ENCODE measurements at regions of chr9 and their contacts with region 1.

Region 1: DNA sequence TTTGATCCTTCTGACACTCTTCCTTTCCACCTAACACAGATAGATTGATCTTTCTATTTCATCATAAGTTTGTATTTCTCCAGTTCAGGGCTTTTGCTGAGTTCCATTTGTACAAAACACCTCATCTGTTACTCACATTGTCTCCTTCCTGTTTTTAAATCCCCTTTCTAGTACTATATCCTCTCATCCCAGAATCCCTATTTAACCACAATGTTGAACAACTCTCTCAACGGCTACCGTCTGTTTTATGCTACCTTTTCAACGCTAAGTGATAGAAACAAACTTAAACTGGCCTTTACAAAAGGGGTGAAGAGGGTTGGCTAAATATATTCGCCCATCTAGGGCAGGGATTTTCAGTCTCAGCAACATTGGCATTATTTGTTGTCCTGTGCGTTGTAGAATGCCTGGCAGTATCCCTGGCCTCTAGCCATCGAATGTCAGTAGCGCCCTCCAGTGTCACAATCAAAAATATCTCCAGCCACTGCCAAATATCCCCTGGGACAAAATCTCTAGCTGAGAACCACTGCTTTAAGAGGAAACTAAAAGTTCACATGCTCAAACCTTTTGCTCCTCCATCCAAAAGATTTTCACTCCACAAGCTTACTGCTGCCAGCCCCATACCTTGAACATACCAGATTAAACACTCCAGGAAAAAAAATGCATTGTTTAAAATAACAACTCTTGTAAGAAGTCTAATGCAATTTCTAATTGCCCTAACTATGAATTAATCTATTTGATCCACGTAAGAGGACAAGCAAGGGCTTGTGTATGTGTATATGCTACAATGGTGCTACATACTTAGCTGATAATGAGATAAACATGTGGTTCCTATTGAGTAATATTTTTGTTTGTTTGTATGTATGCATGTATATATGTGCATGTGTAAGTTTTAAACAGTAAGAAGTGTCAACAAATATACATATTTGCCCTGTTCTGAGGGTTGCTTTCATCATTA is 344.0 kb downstream of the PTPRD start:
- DNase-seq: peak; percentile 12
- ATAC-seq: peak; percentile 42; the same call in 1 of the 2 replicates
- H3K4me3 ChIP-seq: 0 out of 2 replicates have a peak overlapping the region, but pooled peaks have one; percentile 5
- H3K27ac ChIP-seq: no peak overlapping the region
- H3K4me1 ChIP-seq: no peaks in the 10 kb centered on the region; the same call in 1 of the 2 replicates
- H3K27me3 ChIP-seq: no peaks in the 10 kb centered on the region
- CTCF ChIP-seq: peak; percentile 55
- POLR2A ChIP-seq: no peak
- RAD21 ChIP-seq: peak; percentile 60

Region 2: GRCh38 chr9:10045598-10045997 is 223.2 kb before region 1 on chr9:
- CTCF ChIA-PET with region 1: no interaction called
- POLR2A ChIA-PET with region 1: no interaction called
- dilution Hi-C with region 1: no loop called
- in situ Hi-C with region 1: no loop called
- intact Hi-C with region 1: loop called (anchors 5 kb)
- DNase-seq: peak; percentile 24
- ATAC-seq: no peak
- H3K4me3 ChIP-seq: no peak overlapping the region
- H3K27ac ChIP-seq: no peak overlapping the region
- H3K4me1 ChIP-seq: no peaks in the 10 kb centered on the region
- H3K27me3 ChIP-seq: no peaks in the 10 kb centered on the region
- CTCF ChIP-seq: peak; percentile 58
- POLR2A ChIP-seq: no peak
- RAD21 ChIP-seq: peak; percentile 51

Region 3: DNA sequence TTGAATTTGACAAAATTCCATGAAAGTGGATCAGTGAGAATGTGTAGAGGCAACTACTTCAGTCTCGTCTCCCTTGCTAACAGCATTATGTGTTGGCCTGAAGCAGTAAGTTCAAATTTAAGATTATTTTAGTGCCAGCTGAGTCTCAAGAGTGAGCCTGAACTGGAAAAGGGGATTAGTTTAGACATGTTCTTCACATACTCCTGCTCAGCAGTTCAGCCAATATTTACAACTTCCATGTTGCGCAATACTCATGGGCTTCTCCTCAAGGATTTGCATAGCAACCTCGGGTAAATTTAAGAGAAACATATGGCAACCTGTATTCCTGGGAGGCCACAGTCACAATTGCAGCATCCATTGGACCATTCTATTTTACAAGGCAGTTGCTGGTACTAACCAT is 209.8 kb before region 1 on chr9:
- CTCF ChIA-PET with region 1: interaction called, 3 read pairs
- POLR2A ChIA-PET with region 1: no interaction called
- dilution Hi-C with region 1: no loop called
- in situ Hi-C with region 1: no loop called
- intact Hi-C with region 1: loop called (anchors 1 kb)
- DNase-seq: peak; percentile 28
- ATAC-seq: peak; percentile 44
- H3K4me3 ChIP-seq: no peak overlapping the region
- H3K27ac ChIP-seq: no peak overlapping the region; the same call in 1 of the 2 replicates
- H3K4me1 ChIP-seq: no peaks in the 10 kb centered on the region
- H3K27me3 ChIP-seq: no peaks in the 10 kb centered on the region
- CTCF ChIP-seq: no peak
- POLR2A ChIP-seq: no peak
- RAD21 ChIP-seq: no peak

Region 4: DNA sequence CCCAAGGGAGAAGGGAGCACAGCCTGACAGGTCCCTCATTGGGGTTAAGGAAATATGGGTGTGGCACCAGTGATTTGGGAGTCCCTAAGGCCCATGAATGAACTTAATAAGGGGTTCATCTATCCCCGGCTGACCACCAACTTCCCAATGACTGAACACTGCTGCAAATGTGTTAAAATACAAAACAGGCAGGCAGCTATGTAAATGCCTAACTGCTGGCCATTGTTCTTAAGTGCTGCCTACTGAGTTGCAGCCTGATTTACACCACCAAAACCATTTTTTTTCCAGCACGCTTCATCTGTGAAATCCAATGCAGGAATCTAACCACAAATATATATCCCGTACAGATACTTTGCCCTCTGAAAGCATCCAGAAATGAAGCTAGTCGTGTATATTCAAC is 134.5 kb before region 1 on chr9:
- CTCF ChIA-PET with region 1: no interaction called
- POLR2A ChIA-PET with region 1: no interaction called
- dilution Hi-C with region 1: no loop called
- in situ Hi-C with region 1: no loop called
- intact Hi-C with region 1: no loop called
- DNase-seq: no peak
- ATAC-seq: no peak
- H3K4me3 ChIP-seq: no peak overlapping the region
- H3K27ac ChIP-seq: no peak overlapping the region
- H3K4me1 ChIP-seq: no peaks in the 10 kb centered on the region
- H3K27me3 ChIP-seq: no peaks in the 10 kb centered on the region
- CTCF ChIP-seq: no peak
- POLR2A ChIP-seq: no peak
- RAD21 ChIP-seq: no peak